IMR-90 (cell line): ENCODE measurements at regions of chr10 and their contacts with region 1.

Region 1: GRCh38 chr10:102225646-102226541 is at the start of gene ELOVL3:
- DNase-seq: peak; percentile 91
- ATAC-seq: peak; percentile 96
- H3K4me3 ChIP-seq: peak within 1 kb of the TSS; percentile 33
- H3K27ac ChIP-seq: peak within 1 kb of the TSS; percentile 35
- H3K4me1 ChIP-seq: peaks cover 11% of the 10 kb centered on the region
- H3K27me3 ChIP-seq: peaks cover 22% of the 10 kb centered on the region
- CTCF ChIP-seq: no peak
- POLR2A ChIP-seq: no peak
- RAD21 ChIP-seq: no peak
- total RNA-seq, gene ELOVL3: 0.28 and 0.36 TPM in 2 replicates

Region 2: DNA sequence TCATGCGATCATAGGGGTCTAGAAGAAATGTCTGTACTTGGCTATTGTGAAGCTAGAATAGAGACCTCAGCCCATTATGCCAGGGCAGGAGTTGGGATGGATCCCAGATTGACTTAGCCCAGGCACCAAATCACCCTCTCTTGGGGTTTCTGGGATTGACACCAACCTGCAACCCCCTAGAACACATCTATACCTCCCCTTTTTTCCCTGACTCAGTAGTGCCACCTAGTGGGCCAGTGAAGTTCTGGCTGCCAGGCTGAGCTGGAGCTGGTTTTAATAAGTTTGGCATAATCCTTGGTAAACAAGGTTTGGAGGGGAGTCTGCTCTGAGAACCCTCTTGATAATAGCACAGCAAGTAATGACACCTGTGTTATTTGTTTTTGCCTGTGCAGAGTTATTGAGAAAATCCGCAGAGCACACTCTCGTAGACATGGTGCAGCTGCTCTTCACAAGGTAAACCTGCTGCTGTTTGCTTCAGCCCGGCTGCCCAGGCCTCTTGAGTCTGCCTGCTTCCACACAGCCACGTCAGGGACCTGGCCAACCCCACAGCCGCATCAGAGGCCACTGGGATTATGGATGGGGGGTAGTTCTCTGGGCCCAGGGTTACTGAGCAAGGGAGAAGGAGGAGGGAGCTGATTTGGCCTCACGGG is 126.3 kb after region 1 on chr10:
- CTCF ChIA-PET with region 1: interaction called, 59 read pairs
- POLR2A ChIA-PET with region 1: no interaction called
- dilution Hi-C with region 1: no loop called
- in situ Hi-C with region 1: loop called (anchors 5 kb)
- intact Hi-C with region 1: loop called (anchors 1 kb)
- DNase-seq: peak; percentile 54
- ATAC-seq: peak; percentile 92
- H3K4me3 ChIP-seq: no peak overlapping the region
- H3K27ac ChIP-seq: no peak overlapping the region
- H3K4me1 ChIP-seq: no peaks in the 10 kb centered on the region
- H3K27me3 ChIP-seq: no peaks in the 10 kb centered on the region
- CTCF ChIP-seq: peak; percentile 82
- POLR2A ChIP-seq: no peak
- RAD21 ChIP-seq: peak; percentile 81

Region 3: DNA sequence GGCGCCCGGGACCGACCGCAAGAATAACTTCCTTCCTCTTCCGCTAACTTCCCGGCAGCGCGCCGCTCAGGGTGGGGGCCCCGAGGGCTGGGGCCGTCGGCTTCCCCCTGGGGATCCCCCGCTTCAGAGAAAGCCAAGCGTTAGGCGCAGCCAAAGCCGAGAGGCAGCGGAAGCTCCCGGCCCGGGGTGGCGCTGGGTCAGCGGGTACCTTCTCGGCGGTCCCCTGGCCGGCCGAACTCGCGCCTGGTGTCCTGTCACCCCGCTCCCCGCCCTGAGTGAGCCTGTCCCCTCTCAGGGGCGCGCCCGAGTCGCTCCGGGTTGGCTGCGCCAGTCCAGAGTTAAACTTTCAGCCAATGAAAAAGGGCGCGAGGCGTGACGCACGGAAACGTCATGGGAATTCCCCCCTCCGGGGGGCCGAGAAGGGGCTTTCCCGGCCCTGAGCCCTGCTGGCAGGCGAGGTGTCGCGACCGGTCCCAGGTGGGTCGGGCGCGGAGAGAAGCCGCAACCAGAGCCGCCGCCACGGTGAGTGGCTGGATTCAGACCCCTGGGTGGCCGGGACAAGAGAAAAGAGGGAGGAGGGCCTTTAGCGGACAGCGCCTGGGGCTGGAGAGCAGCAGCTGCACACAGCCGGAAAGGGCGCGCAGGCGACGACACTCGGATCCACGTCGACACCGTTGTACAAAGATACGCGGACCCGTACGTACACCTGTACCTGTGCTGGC is 168.3 kb after region 1 on chr10:
- CTCF ChIA-PET with region 1: interaction called, 9 read pairs
- POLR2A ChIA-PET with region 1: no interaction called
- dilution Hi-C with region 1: no loop called
- in situ Hi-C with region 1: no loop called
- intact Hi-C with region 1: loop called (anchors 1 kb)
- DNase-seq: peak; percentile 95
- ATAC-seq: peak; percentile 89
- H3K4me3 ChIP-seq: peak overlapping the region; percentile 51
- H3K27ac ChIP-seq: peak overlapping the region; percentile 55
- H3K4me1 ChIP-seq: peaks cover 7% of the 10 kb centered on the region
- H3K27me3 ChIP-seq: no peaks in the 10 kb centered on the region
- CTCF ChIP-seq: no peak; the same call in 1 of the 2 replicates
- POLR2A ChIP-seq: peak; percentile 93
- RAD21 ChIP-seq: no peak

Region 4: GRCh38 chr10:102399217-102400089 is 173.6 kb after region 1 on chr10:
- CTCF ChIA-PET with region 1: interaction called, 9 read pairs
- POLR2A ChIA-PET with region 1: no interaction called
- dilution Hi-C with region 1: no loop called
- in situ Hi-C with region 1: no loop called
- intact Hi-C with region 1: loop called (anchors 1 kb)
- DNase-seq: peak; percentile 82
- ATAC-seq: peak; percentile 76
- H3K4me3 ChIP-seq: peak overlapping the region; percentile 39
- H3K27ac ChIP-seq: peak overlapping the region; percentile 46
- H3K4me1 ChIP-seq: peaks cover 17% of the 10 kb centered on the region
- H3K27me3 ChIP-seq: no peaks in the 10 kb centered on the region
- CTCF ChIP-seq: peak; percentile 95
- POLR2A ChIP-seq: no peak
- RAD21 ChIP-seq: peak; percentile 68

Region 5: GRCh38 chr10:102485093-102485784 is 259.3 kb after region 1 on chr10:
- CTCF ChIA-PET with region 1: no interaction called
- POLR2A ChIA-PET with region 1: no interaction called
- dilution Hi-C with region 1: no loop called
- in situ Hi-C with region 1: loop called (anchors 10 kb)
- intact Hi-C with region 1: no loop called
- DNase-seq: no peak
- ATAC-seq: no peak
- H3K4me3 ChIP-seq: no peak overlapping the region
- H3K27ac ChIP-seq: no peak overlapping the region
- H3K4me1 ChIP-seq: no peaks in the 10 kb centered on the region
- H3K27me3 ChIP-seq: no peaks in the 10 kb centered on the region
- CTCF ChIP-seq: no peak
- POLR2A ChIP-seq: no peak
- RAD21 ChIP-seq: no peak

Region 6: GRCh38 chr10:102583435-102584417 is 357.8 kb after region 1 on chr10:
- CTCF ChIA-PET with region 1: no interaction called
- POLR2A ChIA-PET with region 1: no interaction called
- dilution Hi-C with region 1: no loop called
- in situ Hi-C with region 1: no loop called
- intact Hi-C with region 1: loop called (anchors 10 kb)
- DNase-seq: peak; percentile 91
- ATAC-seq: peak; percentile 93
- H3K4me3 ChIP-seq: no peak overlapping the region
- H3K27ac ChIP-seq: no peak overlapping the region
- H3K4me1 ChIP-seq: peaks cover 21% of the 10 kb centered on the region
- H3K27me3 ChIP-seq: no peaks in the 10 kb centered on the region
- CTCF ChIP-seq: peak; percentile 90
- POLR2A ChIP-seq: no peak
- RAD21 ChIP-seq: peak; percentile 93